Activated CD4-positive, alpha-beta T cell treated with anti-CD3 and anti-CD28 coated beads, Interleukin-2, amount 10 ng/mL, durations not matched to agents 24 days and 14 days (primary cell): ENCODE measurements at regions of chr4 and their contacts with region 1.

Region 1: GRCh38 chr4:17336524-17336961 is 175.3 kb downstream of the QDPR start:
- DNase-seq: peak; percentile 94
- H3K4me3 Mint-ChIP-seq: peak overlapping the region; percentile 60
- H3K27ac Mint-ChIP-seq: peak overlapping the region; percentile 92
- H3K4me1 Mint-ChIP-seq: peaks cover 38% of the 10 kb centered on the region
- H3K27me3 Mint-ChIP-seq: peaks cover 7% of the 10 kb centered on the region

Region 2: GRCh38 chr4:16916719-16917337 is 419.7 kb before region 1 on chr4:
- intact Hi-C with region 1: loop called (anchors 5 kb)
- DNase-seq: peak; percentile 94
- H3K4me3 Mint-ChIP-seq: no peak overlapping the region
- H3K27ac Mint-ChIP-seq: no peak overlapping the region
- H3K4me1 Mint-ChIP-seq: peaks cover 3% of the 10 kb centered on the region
- H3K27me3 Mint-ChIP-seq: peaks cover 3% of the 10 kb centered on the region

Region 3: DNA sequence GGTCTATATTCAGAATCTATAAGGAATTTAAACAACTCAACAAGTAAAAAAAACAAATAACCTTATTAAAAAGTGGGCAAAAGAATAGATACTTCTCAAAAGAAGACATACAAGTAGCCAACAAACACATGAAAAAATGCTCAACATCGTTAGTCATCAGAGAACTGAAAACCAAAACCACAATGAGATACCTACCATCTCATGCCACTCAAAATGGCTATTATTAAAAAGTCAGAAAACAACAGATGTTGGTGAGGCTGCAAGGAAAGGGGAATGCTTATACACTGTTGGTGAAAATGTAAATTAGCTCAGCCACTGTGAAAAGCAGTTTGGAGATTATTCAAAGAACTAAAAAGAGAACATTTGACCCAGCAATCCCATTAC is 26.3 kb before region 1 on chr4:
- intact Hi-C with region 1: no loop called
- DNase-seq: no peak
- H3K4me3 Mint-ChIP-seq: no peak overlapping the region
- H3K27ac Mint-ChIP-seq: no peak overlapping the region
- H3K4me1 Mint-ChIP-seq: peaks cover 3% of the 10 kb centered on the region
- H3K27me3 Mint-ChIP-seq: peaks cover 16% of the 10 kb centered on the region

Region 4: DNA sequence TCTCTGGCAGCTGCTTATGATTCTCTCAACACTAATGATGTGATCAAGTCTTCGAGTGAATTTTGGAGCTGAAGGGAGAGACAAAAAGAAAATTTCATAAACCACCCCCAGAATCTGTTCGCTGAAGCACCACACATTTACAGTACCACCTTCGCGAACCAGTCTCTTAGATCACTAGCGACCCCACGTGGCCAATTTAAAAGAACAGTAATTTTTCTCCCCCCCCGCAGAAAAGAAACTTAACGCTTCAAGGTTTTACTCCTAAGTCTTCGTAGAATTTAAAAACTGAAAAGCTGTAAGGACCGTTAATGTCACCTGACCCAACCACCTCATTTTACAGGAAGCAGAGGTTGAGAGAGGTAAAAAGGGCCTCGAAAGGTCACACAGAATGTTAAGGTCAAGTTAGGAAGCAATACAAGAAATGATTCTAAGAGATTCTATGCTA is 12.1 kb before region 1 on chr4:
- intact Hi-C with region 1: loop called (anchors 1 kb)
- DNase-seq: peak; percentile 84
- H3K4me3 Mint-ChIP-seq: peak overlapping the region; percentile 39
- H3K27ac Mint-ChIP-seq: peak overlapping the region; percentile 48
- H3K4me1 Mint-ChIP-seq: peaks cover 20% of the 10 kb centered on the region
- H3K27me3 Mint-ChIP-seq: no peaks in the 10 kb centered on the region

Region 5: DNA sequence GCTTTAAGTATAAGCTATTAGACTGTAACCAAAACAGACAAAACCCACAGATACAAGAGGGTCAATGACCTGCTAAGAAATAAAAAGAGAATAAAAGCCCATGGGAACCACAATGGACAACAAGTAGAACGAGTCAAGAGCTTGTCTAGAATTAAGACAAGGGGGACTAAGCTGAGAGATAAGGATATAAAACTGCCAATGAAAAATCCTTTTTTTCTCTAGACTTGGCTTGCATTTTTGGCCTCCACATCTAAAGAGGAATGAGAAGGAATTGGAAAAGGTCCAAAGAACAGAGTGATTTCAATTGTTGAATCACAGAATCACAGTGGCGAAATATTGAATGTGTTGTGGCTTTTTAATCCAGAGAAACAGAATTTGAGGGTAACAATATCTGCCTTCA is 39.7 kb after region 1 on chr4:
- intact Hi-C with region 1: no loop called
- DNase-seq: no peak
- H3K4me3 Mint-ChIP-seq: no peak overlapping the region
- H3K27ac Mint-ChIP-seq: no peak overlapping the region
- H3K4me1 Mint-ChIP-seq: no peaks in the 10 kb centered on the region
- H3K27me3 Mint-ChIP-seq: peaks cover 17% of the 10 kb centered on the region

Region 6: GRCh38 chr4:17468371-17469221 is 132.1 kb after region 1 on chr4:
- intact Hi-C with region 1: loop called (anchors 5 kb)
- DNase-seq: no peak
- H3K4me3 Mint-ChIP-seq: no peak overlapping the region
- H3K27ac Mint-ChIP-seq: no peak overlapping the region
- H3K4me1 Mint-ChIP-seq: no peaks in the 10 kb centered on the region
- H3K27me3 Mint-ChIP-seq: no peaks in the 10 kb centered on the region

Region 7: DNA sequence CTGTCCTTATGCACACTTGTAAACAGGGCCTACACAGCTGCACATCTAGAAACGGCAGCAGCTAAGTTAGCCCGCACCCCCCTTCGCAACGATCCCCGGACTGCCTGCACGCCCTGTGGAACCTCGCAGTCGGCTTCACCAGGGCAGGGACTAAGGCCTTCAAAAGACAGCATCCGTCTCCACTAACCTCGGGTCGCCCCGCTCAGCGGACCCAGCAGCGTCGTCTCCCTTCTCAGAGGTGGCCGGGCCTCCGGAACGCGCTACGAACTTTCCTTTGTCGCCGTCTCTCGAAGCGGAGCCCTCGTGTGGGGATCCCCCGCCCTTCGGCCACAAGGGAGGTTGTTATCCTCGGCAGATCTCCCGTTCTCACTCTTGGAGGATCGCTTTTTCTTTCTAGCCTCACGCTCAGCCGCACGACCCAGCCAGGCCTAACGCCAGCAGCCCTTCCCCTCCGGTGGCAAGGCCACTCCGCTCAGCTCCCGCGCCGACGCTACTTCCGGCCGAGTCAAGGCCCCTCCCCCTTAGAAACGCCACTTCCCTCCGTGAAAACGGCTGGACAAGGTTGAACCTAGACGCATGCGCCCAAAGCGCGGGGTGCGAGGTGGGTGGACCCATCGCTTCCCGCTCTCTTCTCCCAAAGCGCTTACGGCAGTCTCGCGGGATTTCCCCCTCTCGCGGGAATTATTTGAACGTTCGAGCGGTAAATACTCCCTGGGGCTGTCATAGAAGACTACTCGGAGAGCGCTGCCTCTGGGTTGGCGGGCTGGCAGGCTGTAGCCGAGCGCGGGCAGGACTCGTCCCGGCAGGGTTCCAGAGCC is 473.9 kb after region 1 on chr4 and contains the starts of genes DCAF16 and NCAPG:
- intact Hi-C with region 1: loop called (anchors 10 kb)
- DNase-seq: peak; percentile 100
- H3K4me3 Mint-ChIP-seq: peak within 1 kb of the TSS; percentile 97
- H3K27ac Mint-ChIP-seq: peak within 1 kb of the TSS; percentile 99
- H3K4me1 Mint-ChIP-seq: peaks cover 49% of the 10 kb centered on the region
- H3K27me3 Mint-ChIP-seq: peaks cover 2% of the 10 kb centered on the region
- total RNA-seq, gene DCAF16: 47.1 and 51.4 TPM in 2 replicates
- total RNA-seq, gene NCAPG: 46.3 and 53.4 TPM in 2 replicates